Naive thymus-derived CD4-positive, alpha-beta T cell (primary cell): ENCODE measurements at regions of chr10 and their contacts with region 1.

Region 1: GRCh38 chr10:61750929-61751471 is 88.3 kb downstream of the CABCOCO1 start:
- DNase-seq: peak; percentile 37 to 67 (median 58)
- ATAC-seq: peak; percentile 94
- H3K4me3 ChIP-seq: no peak overlapping the region
- H3K4me3 Mint-ChIP-seq: peak overlapping the region in 6 of 10 donors; percentile 6 to 58 (median 36)
- H3K27ac ChIP-seq: no peak overlapping the region
- H3K27ac Mint-ChIP-seq: peak overlapping the region in 4 of 9 donors; percentile 10 to 88 (median 48)
- H3K4me1 ChIP-seq: peaks cover 12 to 15% of the 10 kb centered on the region in 2 donors
- H3K4me1 Mint-ChIP-seq: peaks cover 0 to 29% (median 26%) of the 10 kb centered on the region in 7 donors
- H3K27me3 ChIP-seq: no peaks in the 10 kb centered on the region
- H3K27me3 Mint-ChIP-seq: peaks cover 0 to 4% (median 0%) of the 10 kb centered on the region in 5 donors

Region 2: GRCh38 chr10:61284222-61284890 is 466.6 kb before region 1 on chr10:
- CTCF ChIA-PET with region 1: no interaction called
- POLR2A ChIA-PET with region 1: no interaction called
- intact Hi-C with region 1: loop called in 1 of 2 experiments (anchors 2 kb)
- DNase-seq: peak in 6 of 9 donors; percentile 7 to 43 (median 26)
- ATAC-seq: peak; percentile 45
- H3K4me3 ChIP-seq: no peak overlapping the region
- H3K4me3 Mint-ChIP-seq: peak overlapping the region in 9 of 10 donors; percentile 12 to 81 (median 66)
- H3K27ac ChIP-seq: no peak overlapping the region
- H3K27ac Mint-ChIP-seq: peak overlapping the region in 1 of 9 donors; percentile 7
- H3K4me1 ChIP-seq: peaks cover 9 to 12% of the 10 kb centered on the region in 2 donors
- H3K4me1 Mint-ChIP-seq: peaks cover 13 to 24% (median 20%) of the 10 kb centered on the region in 7 donors
- H3K27me3 ChIP-seq: no peaks in the 10 kb centered on the region
- H3K27me3 Mint-ChIP-seq: peaks cover 0 to 22% (median 0%) of the 10 kb centered on the region in 5 donors

Region 3: DNA sequence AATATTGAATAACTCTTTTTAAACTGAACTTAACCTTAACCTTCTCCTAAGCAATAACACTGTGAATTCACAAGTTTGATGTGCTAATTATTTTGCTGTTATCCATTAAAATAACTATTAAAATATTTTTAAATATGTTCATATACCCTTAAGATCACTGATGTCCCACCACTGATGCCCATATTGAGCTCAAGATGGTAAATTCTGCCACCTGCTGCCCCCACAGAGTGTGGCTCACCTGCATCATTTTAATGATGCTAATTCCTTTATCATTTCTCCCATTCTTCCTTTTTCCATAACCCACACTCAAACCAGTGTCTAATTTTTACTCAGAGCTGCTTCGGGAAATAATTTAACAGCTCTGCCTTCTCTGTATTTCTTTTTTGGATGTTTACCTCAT is 68.2 kb after region 1 on chr10:
- CTCF ChIA-PET with region 1: interaction called, 8 read pairs
- POLR2A ChIA-PET with region 1: interaction called, 3 read pairs
- intact Hi-C with region 1: loop called in 1 of 2 experiments (anchors 1 kb)
- DNase-seq: no peak
- ATAC-seq: no peak
- H3K4me3 ChIP-seq: no peak overlapping the region
- H3K4me3 Mint-ChIP-seq: no peak overlapping the region
- H3K27ac ChIP-seq: no peak overlapping the region
- H3K27ac Mint-ChIP-seq: no peak overlapping the region
- H3K4me1 ChIP-seq: no peaks in the 10 kb centered on the region
- H3K4me1 Mint-ChIP-seq: no peaks in the 10 kb centered on the region
- H3K27me3 ChIP-seq: no peaks in the 10 kb centered on the region
- H3K27me3 Mint-ChIP-seq: no peaks in the 10 kb centered on the region

Region 4: GRCh38 chr10:61869774-61870525 is 119.0 kb after region 1 on chr10:
- CTCF ChIA-PET with region 1: interaction called, 52 read pairs
- POLR2A ChIA-PET with region 1: interaction called, 9 read pairs
- intact Hi-C with region 1: loop called (anchors 1 to 2 kb)
- DNase-seq: no peak
- ATAC-seq: no peak
- H3K4me3 ChIP-seq: no peak overlapping the region
- H3K4me3 Mint-ChIP-seq: no peak overlapping the region
- H3K27ac ChIP-seq: no peak overlapping the region
- H3K27ac Mint-ChIP-seq: no peak overlapping the region
- H3K4me1 ChIP-seq: no peaks in the 10 kb centered on the region
- H3K4me1 Mint-ChIP-seq: peaks cover 0 to 10% (median 4%) of the 10 kb centered on the region in 7 donors
- H3K27me3 ChIP-seq: peaks cover 0 to 3% of the 10 kb centered on the region in 2 donors
- H3K27me3 Mint-ChIP-seq: peaks cover 0 to 15% (median 3%) of the 10 kb centered on the region in 5 donors

Region 5: DNA sequence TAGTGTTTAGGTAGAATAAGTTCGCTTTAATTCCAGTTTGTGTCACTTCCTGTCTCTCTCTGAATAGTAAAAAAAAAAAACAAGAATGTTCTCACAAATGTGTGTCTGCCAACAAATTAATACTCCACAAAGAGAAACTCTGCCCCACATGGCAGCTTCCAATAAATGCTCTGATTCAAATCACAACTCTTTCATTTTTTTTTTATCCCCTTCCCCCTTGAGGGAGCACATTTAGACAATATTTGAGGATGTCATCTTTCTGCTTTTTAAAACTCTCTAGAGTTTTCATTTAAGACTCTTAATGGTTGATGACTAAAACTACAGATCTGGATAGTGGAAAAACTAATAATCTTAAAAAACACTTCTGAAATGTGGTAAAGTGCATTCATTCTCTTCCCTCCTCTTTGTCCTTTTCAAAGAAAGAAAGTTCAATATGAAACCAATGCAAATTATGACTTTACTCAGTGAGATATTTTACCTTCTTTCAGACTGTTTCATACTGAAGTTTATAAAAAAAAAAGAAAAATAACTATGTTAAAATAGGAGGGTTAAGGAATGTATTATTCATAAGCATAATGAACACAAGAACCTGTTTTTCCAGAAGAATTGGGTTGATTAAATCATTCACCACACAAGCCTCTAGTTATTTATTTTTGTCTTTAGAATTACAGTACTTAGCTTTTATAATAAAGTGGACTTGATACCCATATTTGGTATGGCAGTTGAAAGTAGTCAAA is 192.8 kb after region 1 on chr10:
- CTCF ChIA-PET with region 1: no interaction called
- POLR2A ChIA-PET with region 1: no interaction called
- intact Hi-C with region 1: loop called in 1 of 2 experiments (anchors 5 kb)
- DNase-seq: peak in 7 of 9 donors; percentile 25 to 58 (median 36)
- ATAC-seq: peak; percentile 65
- H3K4me3 ChIP-seq: peak overlapping the region; percentile 15
- H3K4me3 Mint-ChIP-seq: peak overlapping the region; percentile 60 to 86 (median 69)
- H3K27ac ChIP-seq: peak overlapping the region; percentile 58
- H3K27ac Mint-ChIP-seq: peak overlapping the region; percentile 47 to 94 (median 88)
- H3K4me1 ChIP-seq: peaks cover 28 to 46% of the 10 kb centered on the region in 2 donors
- H3K4me1 Mint-ChIP-seq: peaks cover 29 to 55% (median 51%) of the 10 kb centered on the region in 7 donors
- H3K27me3 ChIP-seq: no peaks in the 10 kb centered on the region
- H3K27me3 Mint-ChIP-seq: no peaks in the 10 kb centered on the region

Region 6: GRCh38 chr10:62268399-62269114 is 517.6 kb after region 1 on chr10 and contains the start of gene RTKN2:
- CTCF ChIA-PET with region 1: no interaction called
- POLR2A ChIA-PET with region 1: no interaction called
- intact Hi-C with region 1: loop called in 1 of 2 experiments (anchors 5 kb)
- DNase-seq: peak; percentile 52 to 76 (median 64)
- ATAC-seq: peak; percentile 89
- H3K4me3 ChIP-seq: peak within 1 kb of the TSS; percentile 69
- H3K4me3 Mint-ChIP-seq: peak within 1 kb of the TSS; percentile 84 to 96 (median 88)
- H3K27ac ChIP-seq: peak within 1 kb of the TSS; percentile 12
- H3K27ac Mint-ChIP-seq: peak within 1 kb of the TSS in 8 of 9 donors; percentile 8 to 75 (median 46)
- H3K4me1 ChIP-seq: peaks cover 0 to 5% of the 10 kb centered on the region in 2 donors
- H3K4me1 Mint-ChIP-seq: peaks cover 9 to 19% (median 14%) of the 10 kb centered on the region in 7 donors
- H3K27me3 ChIP-seq: peaks cover 0 to 9% of the 10 kb centered on the region in 2 donors
- H3K27me3 Mint-ChIP-seq: peaks cover 4 to 43% (median 16%) of the 10 kb centered on the region in 5 donors
- total RNA-seq, gene RTKN2: 1.4 to 7.8 (median 3.0) TPM

Region 7: DNA sequence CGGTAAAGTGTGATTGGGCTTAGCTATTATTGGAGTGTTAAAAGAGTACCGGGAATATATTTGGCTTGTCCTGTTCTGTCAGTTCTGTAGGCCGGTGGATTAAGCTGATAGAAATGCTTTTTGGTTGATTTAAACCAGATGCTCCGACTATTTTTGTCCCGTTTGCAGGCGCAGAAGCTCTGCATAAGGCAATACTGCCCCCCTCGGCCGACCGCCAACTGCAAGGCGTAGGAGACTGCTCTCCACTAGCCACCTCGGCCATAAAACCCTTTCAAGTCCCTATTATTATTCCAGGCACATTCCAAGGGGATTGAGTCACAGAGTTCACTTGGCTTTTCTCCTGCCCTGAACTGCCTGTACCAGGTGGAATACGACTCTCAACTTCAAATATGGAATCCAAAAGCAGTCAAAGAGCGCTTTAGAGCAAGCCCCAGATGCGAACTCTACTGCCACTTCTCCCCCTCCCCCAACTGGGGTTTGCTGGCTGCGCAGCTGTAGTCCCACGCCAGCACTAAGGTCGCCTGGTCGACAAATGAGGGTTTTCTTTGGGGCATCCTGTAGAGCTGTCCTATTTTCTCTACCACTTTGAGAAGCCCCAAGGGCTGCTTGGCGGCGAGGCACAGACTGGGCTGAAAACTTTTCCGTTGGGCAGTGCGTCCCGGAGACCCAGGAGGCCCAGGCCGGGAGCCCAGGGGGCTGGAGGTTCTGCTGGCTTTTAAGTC is 1878.5 kb after region 1 on chr10:
- CTCF ChIA-PET with region 1: no interaction called
- POLR2A ChIA-PET with region 1: no interaction called
- intact Hi-C with region 1: loop called in 1 of 2 experiments (anchors 5 kb)
- DNase-seq: peak; percentile 61 to 81 (median 78)
- ATAC-seq: peak; percentile 81
- H3K4me3 ChIP-seq: peak overlapping the region; percentile 90
- H3K4me3 Mint-ChIP-seq: peak overlapping the region; percentile 87 to 98 (median 95)
- H3K27ac ChIP-seq: peak overlapping the region; percentile 69
- H3K27ac Mint-ChIP-seq: peak overlapping the region; percentile 79 to 95 (median 90)
- H3K4me1 ChIP-seq: peaks cover 0 to 17% of the 10 kb centered on the region in 2 donors
- H3K4me1 Mint-ChIP-seq: peaks cover 19 to 40% (median 26%) of the 10 kb centered on the region in 7 donors
- H3K27me3 ChIP-seq: no peaks in the 10 kb centered on the region
- H3K27me3 Mint-ChIP-seq: peaks cover 0 to 3% (median 0%) of the 10 kb centered on the region in 5 donors